OCI-LY7 (cell line): ENCODE measurements at regions of chr22 and their contacts with region 1.

Region 1: DNA sequence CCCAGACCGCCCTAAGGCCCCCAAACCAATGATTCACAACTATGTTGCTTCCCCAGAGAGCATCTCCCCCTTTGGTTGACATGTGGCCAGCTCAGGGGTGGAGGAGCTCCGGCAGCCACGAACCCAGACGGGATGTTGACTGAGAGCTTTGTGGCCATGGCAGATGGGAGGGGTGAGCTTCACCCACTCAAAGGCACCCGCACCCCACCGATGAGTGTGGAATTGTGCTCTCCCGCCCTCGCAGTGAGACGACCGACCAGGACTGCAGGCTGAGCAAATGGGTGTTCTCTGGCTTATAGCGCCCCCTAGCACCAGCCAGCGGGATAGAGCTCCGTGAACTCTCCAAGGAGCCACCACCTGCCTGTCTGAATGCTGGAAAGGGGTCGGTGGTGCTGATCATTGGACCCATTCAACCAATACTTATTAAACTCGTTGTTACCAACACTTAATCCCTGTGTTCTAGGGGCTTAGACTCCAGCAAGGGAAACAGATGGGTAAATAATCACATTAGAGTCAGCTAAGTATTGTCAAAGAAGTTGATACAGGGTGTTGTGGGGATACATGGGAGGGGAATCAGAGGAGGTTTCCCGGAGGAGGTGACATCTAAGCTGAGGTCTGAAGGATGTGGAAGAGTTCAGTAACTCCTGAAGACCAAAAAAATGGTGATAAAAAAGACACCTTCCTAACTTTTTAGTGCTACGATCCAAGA is 4.5 kb upstream of the TIMP3 start:
- DNase-seq: peak; percentile 43
- H3K4me3 ChIP-seq: no peak overlapping the region
- H3K27ac ChIP-seq: no peak overlapping the region
- H3K4me1 ChIP-seq: no peaks in the 10 kb centered on the region
- CTCF ChIP-seq: peak; percentile 89

Region 2: DNA sequence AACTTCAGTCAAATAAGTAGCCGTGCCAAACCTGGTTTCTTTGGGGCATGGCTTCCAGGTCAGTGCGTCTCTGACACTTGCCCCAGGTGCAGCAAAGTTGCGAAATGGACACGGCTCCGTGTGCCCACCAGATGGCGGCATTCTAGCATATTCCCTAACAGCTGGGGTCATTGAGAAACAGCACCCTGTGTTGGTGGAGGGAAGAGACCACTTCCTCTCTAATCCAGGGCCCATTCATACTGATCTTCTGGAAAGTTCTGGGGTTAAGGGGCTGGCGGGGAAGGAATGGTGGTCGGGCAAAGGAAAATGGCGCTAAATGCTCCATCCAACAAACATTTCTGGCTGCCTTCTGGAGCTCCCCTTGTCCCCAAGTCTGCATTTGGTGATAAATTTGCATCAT is 136.7 kb before region 1 on chr22:
- CTCF ChIA-PET with region 1: interaction called, 3 read pairs
- POLR2A ChIA-PET with region 1: no interaction called
- intact Hi-C with region 1: loop called (anchors 2 kb)
- DNase-seq: peak; percentile 66
- H3K4me3 ChIP-seq: no peak overlapping the region
- H3K27ac ChIP-seq: no peak overlapping the region
- H3K4me1 ChIP-seq: no peaks in the 10 kb centered on the region
- CTCF ChIP-seq: peak; percentile 82

Region 3: GRCh38 chr22:32836280-32837123 is 39.5 kb after region 1 on chr22:
- CTCF ChIA-PET with region 1: no interaction called
- POLR2A ChIA-PET with region 1: no interaction called
- intact Hi-C with region 1: no loop called
- DNase-seq: peak; percentile 23
- H3K4me3 ChIP-seq: no peak overlapping the region
- H3K27ac ChIP-seq: no peak overlapping the region
- H3K4me1 ChIP-seq: no peaks in the 10 kb centered on the region
- CTCF ChIP-seq: peak; percentile 78

Region 4: GRCh38 chr22:32850591-32851517 is 53.8 kb after region 1 on chr22:
- CTCF ChIA-PET with region 1: no interaction called
- POLR2A ChIA-PET with region 1: no interaction called
- intact Hi-C with region 1: no loop called
- DNase-seq: no peak
- H3K4me3 ChIP-seq: no peak overlapping the region
- H3K27ac ChIP-seq: no peak overlapping the region
- H3K4me1 ChIP-seq: no peaks in the 10 kb centered on the region
- CTCF ChIP-seq: no peak